ENCODE measurements at regions of chr4 and their contacts with region 1.

Region 1: GRCh38 chr4:42568610-42569207 is 88.2 kb downstream of the ATP8A1 start:
- DNase-seq: no peak
- ATAC-seq: peak; percentile 89
- H3K4me3 ChIP-seq: no peak overlapping the region
- H3K27ac ChIP-seq: no peak overlapping the region
- H3K4me1 ChIP-seq: no peaks in the 10 kb centered on the region
- H3K27me3 ChIP-seq: no peaks in the 10 kb centered on the region

Region 2: DNA sequence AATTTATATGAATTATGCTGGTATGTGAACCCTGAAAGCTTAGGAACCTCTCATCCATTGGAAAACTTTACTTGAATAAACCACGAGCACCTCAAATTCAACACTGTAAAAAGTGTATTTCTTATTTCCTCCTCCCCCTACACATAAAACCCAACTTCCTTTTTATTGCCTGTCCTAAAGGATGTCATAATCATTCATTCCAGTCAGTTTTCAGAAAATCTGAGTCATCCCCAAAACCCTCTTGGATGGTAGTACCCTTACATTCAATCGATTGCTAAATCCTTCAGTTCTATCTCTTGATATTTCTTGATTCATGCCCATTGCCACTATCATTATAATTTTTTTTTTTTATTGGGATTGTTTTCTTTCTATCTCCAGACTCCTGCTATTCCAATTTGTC is 179.3 kb after region 1 on chr4:
- intact Hi-C with region 1: loop called (anchors 2 to 5 kb)
- DNase-seq: no peak
- ATAC-seq: no peak
- H3K4me3 ChIP-seq: no peak overlapping the region
- H3K27ac ChIP-seq: no peak overlapping the region
- H3K4me1 ChIP-seq: peaks cover 0 to 2% of the 10 kb centered on the region in 2 donors
- H3K27me3 ChIP-seq: no peaks in the 10 kb centered on the region

Region 3: GRCh38 chr4:42865572-42866189 is 297.0 kb after region 1 on chr4:
- intact Hi-C with region 1: loop called (anchors 2 to 5 kb)
- DNase-seq: no peak
- ATAC-seq: no peak
- H3K4me3 ChIP-seq: no peak overlapping the region
- H3K27ac ChIP-seq: no peak overlapping the region
- H3K4me1 ChIP-seq: no peaks in the 10 kb centered on the region
- H3K27me3 ChIP-seq: peaks cover 0 to 3% of the 10 kb centered on the region in 2 donors

Measured in aorta (tissue), 5 donors.